ENCODE measurements at regions of chr7 and their contacts with region 1.

Region 1: GRCh38 chr7:28608731-28609130 is 196.4 kb downstream of the CREB5 start:
- DNase-seq: no peak
- H3K4me3 ChIP-seq: no peak overlapping the region
- H3K27ac ChIP-seq: no peak overlapping the region
- H3K4me1 ChIP-seq: peaks cover 27% of the 10 kb centered on the region
- H3K27me3 ChIP-seq: no peaks in the 10 kb centered on the region
- CTCF ChIP-seq: no peak
- POLR2A ChIP-seq: no peak

Region 2: DNA sequence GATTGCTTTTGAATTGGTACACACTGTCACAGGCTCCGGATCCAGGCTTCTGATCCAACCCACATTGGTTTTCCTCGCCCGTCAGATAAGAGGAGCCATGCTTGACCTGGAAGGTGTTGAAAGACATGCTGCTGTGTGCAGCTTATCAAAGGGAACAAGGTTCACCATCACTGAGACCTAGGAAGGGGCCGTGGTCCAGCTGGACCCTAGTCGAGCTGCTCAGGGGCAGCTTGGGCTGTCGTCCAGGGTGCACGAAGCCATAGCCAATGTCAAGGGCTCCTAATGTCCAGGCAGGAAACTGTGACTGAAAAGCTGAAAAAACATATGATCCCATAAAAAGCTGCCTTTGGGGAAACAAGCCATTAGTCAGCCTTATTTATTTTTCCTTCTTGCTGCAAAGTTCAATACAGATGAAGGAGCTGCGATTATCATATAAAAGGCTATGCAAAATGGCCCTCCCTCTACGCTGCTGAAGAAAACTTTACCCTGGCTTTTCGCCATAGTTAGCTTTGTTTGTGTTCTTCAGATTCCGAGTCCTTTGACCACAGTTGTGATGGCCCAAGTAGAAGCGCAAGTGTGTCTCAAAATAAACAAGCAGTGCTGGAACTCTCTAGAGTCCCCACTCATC is 78.4 kb before region 1 on chr7:
- CTCF ChIA-PET with region 1: interaction called, 4 read pairs
- POLR2A ChIA-PET with region 1: no interaction called
- dilution Hi-C with region 1: no loop called
- intact Hi-C with region 1: loop called (anchors 1 kb)
- DNase-seq: peak; percentile 96
- H3K4me3 ChIP-seq: peak overlapping the region in 1 of 3 experiments; percentile 16
- H3K27ac ChIP-seq: peak overlapping the region; percentile 61
- H3K4me1 ChIP-seq: peaks cover 31% of the 10 kb centered on the region
- H3K27me3 ChIP-seq: no peaks in the 10 kb centered on the region
- CTCF ChIP-seq: no peak
- POLR2A ChIP-seq: peak; percentile 62

Region 3: DNA sequence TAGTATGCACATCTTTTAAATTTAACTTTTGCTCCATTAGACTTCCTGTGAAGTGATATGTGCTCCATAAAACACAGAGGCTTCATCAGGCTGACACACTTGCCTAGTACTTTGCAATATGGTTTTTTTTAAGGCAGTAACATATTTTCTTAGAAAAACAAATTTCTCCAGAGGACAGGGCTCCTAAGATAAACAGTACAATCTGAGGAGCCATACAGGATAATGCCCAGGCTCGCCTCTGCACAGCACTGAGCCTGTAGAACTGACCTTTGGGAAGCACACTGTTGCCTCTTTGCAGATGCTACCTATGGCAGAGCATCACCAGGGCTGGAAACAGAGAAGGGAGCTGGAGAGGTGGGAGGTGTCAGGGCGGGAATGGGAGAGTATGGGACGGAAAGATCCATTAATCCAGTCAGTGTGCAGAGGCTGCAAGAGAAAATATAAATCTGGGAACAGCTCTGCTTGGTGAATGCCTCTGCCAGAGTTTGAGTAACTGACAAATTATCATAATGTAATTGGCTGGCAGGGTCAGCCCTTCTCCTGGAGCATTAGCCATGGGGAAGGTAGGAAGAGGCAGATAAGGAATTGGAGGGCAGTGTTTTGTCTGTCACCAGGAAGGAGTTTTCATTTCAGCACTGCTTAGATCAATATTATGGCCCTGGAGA is 64.1 kb before region 1 on chr7:
- CTCF ChIA-PET with region 1: no interaction called
- POLR2A ChIA-PET with region 1: no interaction called
- dilution Hi-C with region 1: no loop called
- intact Hi-C with region 1: loop called (anchors 2 kb)
- DNase-seq: no peak
- H3K4me3 ChIP-seq: no peak overlapping the region
- H3K27ac ChIP-seq: no peak overlapping the region
- H3K4me1 ChIP-seq: no peaks in the 10 kb centered on the region
- H3K27me3 ChIP-seq: peaks cover 8 to 11% of the 10 kb centered on the region in 2 experiments
- CTCF ChIP-seq: no peak
- POLR2A ChIP-seq: no peak

Region 4: DNA sequence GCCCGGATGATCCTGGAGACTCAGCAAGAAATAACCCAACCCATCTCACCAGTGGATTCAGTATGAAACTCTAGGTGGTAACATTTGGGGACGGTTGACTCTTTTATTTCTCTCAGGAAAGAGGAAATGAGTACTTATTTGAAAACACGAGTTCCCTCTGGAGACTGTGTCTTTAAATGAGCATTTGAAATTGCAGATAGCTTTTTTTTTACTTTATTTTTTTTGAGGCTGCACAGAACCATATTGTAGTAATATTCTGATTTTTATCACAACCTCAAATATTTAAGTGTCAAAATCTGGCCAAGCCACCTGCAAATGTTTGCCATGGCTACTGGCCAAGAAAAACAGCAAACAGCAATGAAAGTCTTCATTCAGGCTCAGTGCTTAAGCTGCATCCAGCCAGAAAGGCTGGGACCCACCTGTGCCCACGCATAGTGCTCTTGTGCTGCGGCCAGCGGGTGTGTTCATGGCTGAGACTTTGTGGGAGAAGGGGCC is 35.6 kb before region 1 on chr7:
- CTCF ChIA-PET with region 1: interaction called, 4 read pairs
- POLR2A ChIA-PET with region 1: no interaction called
- dilution Hi-C with region 1: no loop called
- intact Hi-C with region 1: loop called (anchors 1 kb)
- DNase-seq: peak; percentile 79
- H3K4me3 ChIP-seq: no peak overlapping the region
- H3K27ac ChIP-seq: no peak overlapping the region
- H3K4me1 ChIP-seq: peaks cover 21% of the 10 kb centered on the region
- H3K27me3 ChIP-seq: peaks cover 4 to 10% of the 10 kb centered on the region in 2 experiments
- CTCF ChIP-seq: no peak
- POLR2A ChIP-seq: no peak

Region 5: GRCh38 chr7:28631995-28632394 is 23.3 kb after region 1 on chr7:
- CTCF ChIA-PET with region 1: interaction called, 13 read pairs
- POLR2A ChIA-PET with region 1: no interaction called
- dilution Hi-C with region 1: no loop called
- intact Hi-C with region 1: loop called (anchors 1 kb)
- DNase-seq: peak; percentile 90
- H3K4me3 ChIP-seq: no peak overlapping the region
- H3K27ac ChIP-seq: peak overlapping the region; percentile 56
- H3K4me1 ChIP-seq: peaks cover 12% of the 10 kb centered on the region
- H3K27me3 ChIP-seq: peaks cover 2 to 6% of the 10 kb centered on the region in 2 experiments
- CTCF ChIP-seq: no peak
- POLR2A ChIP-seq: no peak

Measured in endothelial cell of umbilical vein (primary cell).